Naive thymus-derived CD4-positive, alpha-beta T cell (primary cell): ENCODE measurements at regions of chrX and their contacts with region 1.

Region 1: GRCh38 chrX:100895365-100896075 is 21.4 kb upstream of the NOX1 start:
- DNase-seq: peak in 6 of 9 donors; percentile 4 to 47 (median 30)
- ATAC-seq: no peak
- H3K4me3 ChIP-seq: no peak overlapping the region
- H3K4me3 Mint-ChIP-seq: no peak overlapping the region
- H3K27ac ChIP-seq: no peak overlapping the region
- H3K27ac Mint-ChIP-seq: no peak overlapping the region
- H3K4me1 ChIP-seq: no peaks in the 10 kb centered on the region
- H3K4me1 Mint-ChIP-seq: peaks cover 0 to 2% (median 0%) of the 10 kb centered on the region in 7 donors
- H3K27me3 ChIP-seq: no peaks in the 10 kb centered on the region
- H3K27me3 Mint-ChIP-seq: no peaks in the 10 kb centered on the region

Region 2: GRCh38 chrX:101081231-101081630 is 185.7 kb after region 1 on chrX:
- CTCF ChIA-PET with region 1: no interaction called
- POLR2A ChIA-PET with region 1: no interaction called
- intact Hi-C with region 1: no loop called
- DNase-seq: no peak
- ATAC-seq: no peak
- H3K4me3 ChIP-seq: no peak overlapping the region
- H3K4me3 Mint-ChIP-seq: no peak overlapping the region
- H3K27ac ChIP-seq: no peak overlapping the region
- H3K27ac Mint-ChIP-seq: no peak overlapping the region
- H3K4me1 ChIP-seq: no peaks in the 10 kb centered on the region
- H3K4me1 Mint-ChIP-seq: peaks cover 0 to 11% (median 5%) of the 10 kb centered on the region in 7 donors
- H3K27me3 ChIP-seq: no peaks in the 10 kb centered on the region
- H3K27me3 Mint-ChIP-seq: peaks cover 0 to 27% (median 24%) of the 10 kb centered on the region in 5 donors

Region 3: DNA sequence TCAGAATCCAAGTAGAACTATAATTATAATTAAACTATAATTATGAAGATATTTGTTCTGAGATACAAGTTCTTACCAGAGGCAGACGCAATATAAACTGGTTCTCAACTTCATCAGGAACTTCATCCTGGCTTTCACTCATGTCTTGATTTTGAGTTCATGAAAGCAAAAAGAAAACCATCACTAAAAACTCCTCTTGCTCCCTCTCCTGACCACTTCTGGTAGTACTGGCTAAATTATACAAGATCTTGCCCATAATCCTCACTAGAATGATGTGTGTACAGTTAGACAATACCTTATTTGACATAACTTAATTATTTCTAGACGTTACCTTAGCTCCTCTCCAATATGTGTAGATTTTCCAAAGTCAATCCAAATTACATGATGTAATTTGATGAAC is 391.9 kb after region 1 on chrX:
- CTCF ChIA-PET with region 1: interaction called, 3 read pairs
- POLR2A ChIA-PET with region 1: no interaction called
- intact Hi-C with region 1: loop called in 1 of 2 experiments (anchors 1 kb)
- DNase-seq: peak in 6 of 9 donors; percentile 1 to 44 (median 38)
- ATAC-seq: peak; percentile 55
- H3K4me3 ChIP-seq: no peak overlapping the region
- H3K4me3 Mint-ChIP-seq: no peak overlapping the region
- H3K27ac ChIP-seq: no peak overlapping the region
- H3K27ac Mint-ChIP-seq: no peak overlapping the region
- H3K4me1 ChIP-seq: no peaks in the 10 kb centered on the region
- H3K4me1 Mint-ChIP-seq: no peaks in the 10 kb centered on the region
- H3K27me3 ChIP-seq: no peaks in the 10 kb centered on the region
- H3K27me3 Mint-ChIP-seq: peaks cover 0 to 6% (median 0%) of the 10 kb centered on the region in 5 donors